Naive thymus-derived CD4-positive, alpha-beta T cell (primary cell): ENCODE measurements at regions of chr4 and their contacts with region 1.

Region 1: DNA sequence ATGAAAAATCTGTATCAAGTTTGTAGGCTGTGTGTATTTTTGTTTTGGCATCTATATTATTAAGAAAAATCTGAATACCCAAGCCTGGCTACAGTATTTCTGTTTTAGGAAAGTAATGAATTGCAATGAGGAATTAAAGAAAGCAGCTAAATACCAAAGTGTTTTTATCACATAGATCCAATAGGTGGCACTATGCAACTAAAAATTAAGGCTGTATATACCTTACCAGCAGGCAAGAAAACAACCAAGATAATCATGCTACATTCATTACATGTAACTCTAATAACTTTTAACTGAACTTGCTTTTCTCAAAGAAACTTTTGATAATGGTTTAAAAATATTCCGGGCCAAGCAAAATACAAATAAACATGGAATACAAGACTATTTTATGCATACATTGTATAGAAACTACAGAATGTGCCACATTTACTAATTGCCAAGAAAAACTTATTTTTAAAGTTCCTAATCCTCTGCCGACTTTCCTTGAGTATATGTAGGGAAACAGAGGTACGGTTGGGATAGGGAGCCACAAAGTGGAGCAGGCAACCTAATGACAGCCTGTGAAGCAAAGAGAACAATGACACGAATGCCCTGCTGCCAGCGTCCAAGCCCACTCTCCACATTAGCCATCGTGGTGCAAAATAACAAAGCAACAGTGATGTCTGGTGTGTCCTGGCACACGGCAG is 63.7 kb downstream of the SEC24D start:
- DNase-seq: peak in 7 of 9 donors; percentile 22 to 53 (median 36)
- ATAC-seq: peak; percentile 80
- H3K4me3 ChIP-seq: no peak overlapping the region
- H3K4me3 Mint-ChIP-seq: no peak overlapping the region
- H3K27ac ChIP-seq: no peak overlapping the region
- H3K27ac Mint-ChIP-seq: no peak overlapping the region
- H3K4me1 ChIP-seq: no peaks in the 10 kb centered on the region
- H3K4me1 Mint-ChIP-seq: no peaks in the 10 kb centered on the region
- H3K27me3 ChIP-seq: no peaks in the 10 kb centered on the region
- H3K27me3 Mint-ChIP-seq: no peaks in the 10 kb centered on the region

Region 2: GRCh38 chr4:118099106-118099505 is 673.1 kb before region 1 on chr4:
- CTCF ChIA-PET with region 1: no interaction called
- POLR2A ChIA-PET with region 1: no interaction called
- intact Hi-C with region 1: no loop called
- DNase-seq: no peak
- ATAC-seq: no peak
- H3K4me3 ChIP-seq: no peak overlapping the region
- H3K4me3 Mint-ChIP-seq: no peak overlapping the region
- H3K27ac ChIP-seq: no peak overlapping the region
- H3K27ac Mint-ChIP-seq: no peak overlapping the region
- H3K4me1 ChIP-seq: no peaks in the 10 kb centered on the region
- H3K4me1 Mint-ChIP-seq: no peaks in the 10 kb centered on the region
- H3K27me3 ChIP-seq: no peaks in the 10 kb centered on the region
- H3K27me3 Mint-ChIP-seq: peaks cover 0 to 2% (median 0%) of the 10 kb centered on the region in 5 donors

Region 3: DNA sequence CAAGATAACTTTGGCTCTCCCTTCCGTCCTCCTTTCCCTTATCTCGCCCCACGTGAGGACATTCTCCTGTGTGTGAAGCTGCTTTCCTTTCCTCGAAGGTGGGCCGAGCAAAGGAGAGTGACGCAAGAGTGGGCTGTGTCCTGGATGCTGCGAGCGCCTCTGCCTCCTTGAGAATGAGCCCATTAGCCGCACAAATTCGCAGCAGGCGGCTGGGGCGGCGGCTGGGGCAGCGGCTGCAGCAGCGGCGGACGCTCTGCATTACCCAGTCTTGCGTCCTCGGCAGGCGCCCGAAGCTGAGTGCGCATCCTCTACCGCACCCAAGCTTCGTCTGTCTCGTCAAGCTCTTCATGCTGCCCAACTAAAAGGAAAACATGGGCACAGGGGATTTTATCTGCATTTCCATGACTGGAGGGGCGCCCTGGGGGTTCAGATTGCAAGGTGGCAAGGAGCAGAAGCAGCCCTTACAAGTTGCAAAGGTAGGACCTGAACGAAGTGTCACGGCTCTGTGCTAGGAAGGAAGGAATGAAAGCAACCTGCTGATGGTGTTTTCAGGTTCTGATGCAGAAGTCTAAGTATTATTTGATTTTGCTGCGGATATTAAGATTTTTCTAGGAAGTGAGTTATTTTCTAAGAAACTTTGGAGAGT is 116.6 kb after region 1 on chr4 and contains the start of gene SYNPO2:
- CTCF ChIA-PET with region 1: interaction called, 27 read pairs
- POLR2A ChIA-PET with region 1: no interaction called
- intact Hi-C with region 1: loop called (anchors 1 kb)
- DNase-seq: peak in 6 of 9 donors; percentile 9 to 33 (median 14)
- ATAC-seq: peak; percentile 66
- H3K4me3 ChIP-seq: peak within 1 kb of the TSS; percentile 46
- H3K4me3 Mint-ChIP-seq: peak within 1 kb of the TSS; percentile 61 to 85 (median 78)
- H3K27ac ChIP-seq: no peak within 1 kb of the TSS
- H3K27ac Mint-ChIP-seq: peak within 1 kb of the TSS in 1 of 9 donors; percentile 8
- H3K4me1 ChIP-seq: peaks cover 0 to 5% of the 10 kb centered on the region in 2 donors
- H3K4me1 Mint-ChIP-seq: peaks cover 10 to 21% (median 18%) of the 10 kb centered on the region in 7 donors
- H3K27me3 ChIP-seq: peaks cover 3 to 6% of the 10 kb centered on the region in 2 donors
- H3K27me3 Mint-ChIP-seq: peaks cover 26 to 51% (median 40%) of the 10 kb centered on the region in 5 donors
- total RNA-seq, gene SYNPO2: 0.61 to 1.1 (median 0.93) TPM

Region 4: DNA sequence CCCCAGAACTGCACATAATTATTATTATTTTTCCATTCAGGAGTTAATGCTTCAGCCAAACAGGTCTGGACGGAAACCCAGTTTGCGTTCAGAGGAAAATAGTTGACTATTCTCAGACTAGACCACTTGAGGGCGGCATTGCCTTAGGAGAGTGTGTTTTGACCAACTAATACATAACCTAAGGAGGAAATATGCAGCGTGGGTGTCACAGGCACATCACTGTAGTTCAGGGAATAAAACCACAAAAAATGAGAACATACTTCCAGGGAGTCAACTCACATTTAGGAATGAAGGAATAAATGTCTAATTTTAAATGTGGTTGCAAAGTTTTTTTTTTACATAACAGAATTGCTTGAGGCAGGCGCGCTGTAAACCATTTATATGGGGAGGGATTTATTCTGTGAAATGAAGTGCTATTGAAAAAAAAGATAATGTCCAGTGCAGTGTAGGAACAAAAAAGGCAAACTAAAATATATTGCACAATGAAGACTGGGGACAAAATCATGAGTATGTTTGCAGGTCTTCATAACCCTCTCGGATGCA is 209.7 kb after region 1 on chr4:
- CTCF ChIA-PET with region 1: no interaction called
- POLR2A ChIA-PET with region 1: no interaction called
- intact Hi-C with region 1: loop called in 1 of 2 experiments (anchors 2 kb)
- DNase-seq: peak in 8 of 9 donors; percentile 14 to 55 (median 38)
- ATAC-seq: peak; percentile 88
- H3K4me3 ChIP-seq: no peak overlapping the region
- H3K4me3 Mint-ChIP-seq: no peak overlapping the region
- H3K27ac ChIP-seq: no peak overlapping the region
- H3K27ac Mint-ChIP-seq: no peak overlapping the region
- H3K4me1 ChIP-seq: no peaks in the 10 kb centered on the region
- H3K4me1 Mint-ChIP-seq: peaks cover 0 to 2% (median 0%) of the 10 kb centered on the region in 7 donors
- H3K27me3 ChIP-seq: no peaks in the 10 kb centered on the region
- H3K27me3 Mint-ChIP-seq: peaks cover 0 to 18% (median 0%) of the 10 kb centered on the region in 5 donors

Region 5: DNA sequence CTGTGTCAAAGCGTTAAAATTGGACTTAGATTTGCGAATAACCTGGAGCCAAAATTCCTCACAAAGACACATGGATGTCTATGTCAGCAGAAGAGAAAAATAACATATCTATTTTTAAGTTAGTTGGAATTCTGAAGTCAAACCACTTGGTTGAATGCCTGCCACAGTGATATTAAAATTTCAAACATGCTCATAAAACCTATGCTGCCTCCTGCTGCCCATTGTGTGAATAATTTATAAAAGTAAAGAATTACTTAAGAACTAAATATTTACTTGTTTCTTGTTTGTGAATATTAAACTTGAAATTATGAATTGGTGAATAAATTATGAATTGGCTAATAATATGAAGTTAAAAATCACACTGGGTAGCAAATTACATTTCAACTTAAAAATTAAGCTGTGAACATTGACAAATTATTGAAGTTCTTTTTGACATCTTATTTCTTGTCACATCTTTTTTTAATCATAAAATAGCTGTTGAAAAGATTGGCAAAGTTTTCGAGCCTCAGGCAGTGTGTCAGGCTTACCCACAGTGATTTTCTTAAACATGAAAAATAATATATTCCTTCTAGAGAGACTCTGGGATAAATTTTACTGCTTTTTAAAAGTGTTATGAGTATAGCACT is 514.3 kb after region 1 on chr4:
- CTCF ChIA-PET with region 1: no interaction called
- POLR2A ChIA-PET with region 1: no interaction called
- intact Hi-C with region 1: loop called (anchors 1 to 5 kb)
- DNase-seq: peak in 7 of 9 donors; percentile 28 to 52 (median 42)
- ATAC-seq: peak; percentile 56
- H3K4me3 ChIP-seq: no peak overlapping the region
- H3K4me3 Mint-ChIP-seq: no peak overlapping the region
- H3K27ac ChIP-seq: no peak overlapping the region
- H3K27ac Mint-ChIP-seq: no peak overlapping the region
- H3K4me1 ChIP-seq: peaks cover 0 to 3% of the 10 kb centered on the region in 2 donors
- H3K4me1 Mint-ChIP-seq: peaks cover 13 to 34% (median 26%) of the 10 kb centered on the region in 7 donors
- H3K27me3 ChIP-seq: no peaks in the 10 kb centered on the region
- H3K27me3 Mint-ChIP-seq: no peaks in the 10 kb centered on the region